ENCODE measurements at regions of chr12 and their contacts with region 1.

Region 1: GRCh38 chr12:117139025-117139717 is 40.0 kb upstream of the TESC start:
- DNase-seq: no peak
- ATAC-seq: no peak
- H3K4me3 ChIP-seq: no peak overlapping the region
- H3K4me3 Mint-ChIP-seq: no peak overlapping the region
- H3K27ac ChIP-seq: no peak overlapping the region
- H3K27ac Mint-ChIP-seq: no peak overlapping the region
- H3K4me1 ChIP-seq: peaks cover 7% of the 10 kb centered on the region
- H3K4me1 Mint-ChIP-seq: peaks cover 2% of the 10 kb centered on the region
- H3K27me3 ChIP-seq: no peaks in the 10 kb centered on the region
- H3K27me3 Mint-ChIP-seq: no peaks in the 10 kb centered on the region
- CTCF ChIP-seq: no peak

Region 2: DNA sequence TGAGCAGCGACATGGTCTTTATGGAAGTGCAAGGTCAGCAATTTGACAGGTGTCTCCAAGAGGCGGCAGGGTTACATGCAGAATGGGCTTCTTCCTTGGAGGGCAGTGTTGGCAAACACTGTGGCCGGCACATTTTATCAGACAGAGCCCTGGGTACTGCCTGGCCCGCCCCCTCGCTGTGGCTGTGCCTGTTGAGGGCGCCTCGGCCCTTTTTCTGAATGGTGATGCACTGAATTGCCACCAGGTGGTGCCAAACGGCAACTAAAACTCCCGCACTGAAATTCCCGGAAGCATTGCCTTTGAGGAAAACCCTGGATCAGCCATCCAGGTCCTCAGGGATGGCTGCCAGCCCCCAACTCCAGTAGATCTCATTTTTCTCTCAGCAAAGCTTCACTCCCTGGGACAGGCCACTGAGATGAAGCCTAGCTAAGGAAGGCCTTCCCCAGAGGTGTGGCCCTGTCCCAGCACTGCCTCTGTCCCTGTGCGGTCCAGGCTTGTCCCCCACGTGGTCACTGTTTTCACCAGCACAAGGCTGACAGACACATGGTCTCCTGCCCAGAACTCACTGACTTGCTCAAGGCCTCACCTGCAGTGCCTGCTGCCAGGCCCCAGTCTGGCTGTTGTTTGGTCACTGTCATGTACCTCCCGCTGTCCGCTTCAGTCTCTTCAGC is 113.6 kb before region 1 on chr12:
- CTCF ChIA-PET with region 1: interaction called, 3 read pairs
- POLR2A ChIA-PET with region 1: no interaction called
- intact Hi-C with region 1: loop called in 1 of 2 experiments (anchors 5 kb)
- DNase-seq: peak in 8 of 9 experiments; percentile 16 to 67 (median 48)
- ATAC-seq: peak; percentile 70
- H3K4me3 ChIP-seq: no peak overlapping the region
- H3K4me3 Mint-ChIP-seq: no peak overlapping the region
- H3K27ac ChIP-seq: no peak overlapping the region
- H3K27ac Mint-ChIP-seq: no peak overlapping the region
- H3K4me1 ChIP-seq: no peaks in the 10 kb centered on the region
- H3K4me1 Mint-ChIP-seq: no peaks in the 10 kb centered on the region
- H3K27me3 ChIP-seq: no peaks in the 10 kb centered on the region
- H3K27me3 Mint-ChIP-seq: no peaks in the 10 kb centered on the region
- CTCF ChIP-seq: peak; percentile 93

Region 3: GRCh38 chr12:117190210-117190781 is 51.1 kb after region 1 on chr12 and contains the start of gene FBXO21:
- CTCF ChIA-PET with region 1: no interaction called
- POLR2A ChIA-PET with region 1: no interaction called
- intact Hi-C with region 1: no loop called
- DNase-seq: peak; percentile 90 to 98 (median 93)
- ATAC-seq: peak; percentile 96
- H3K4me3 ChIP-seq: peak within 1 kb of the TSS; percentile 49 to 87
- H3K4me3 Mint-ChIP-seq: peak within 1 kb of the TSS; percentile 93
- H3K27ac ChIP-seq: peak within 1 kb of the TSS; percentile 69 to 83
- H3K27ac Mint-ChIP-seq: peak within 1 kb of the TSS; percentile 92
- H3K4me1 ChIP-seq: peaks cover 22% of the 10 kb centered on the region
- H3K4me1 Mint-ChIP-seq: peaks cover 31% of the 10 kb centered on the region
- H3K27me3 ChIP-seq: no peaks in the 10 kb centered on the region
- H3K27me3 Mint-ChIP-seq: no peaks in the 10 kb centered on the region
- CTCF ChIP-seq: no peak
- total RNA-seq, gene FBXO21: 77.7 to 87.7 TPM

Region 4: DNA sequence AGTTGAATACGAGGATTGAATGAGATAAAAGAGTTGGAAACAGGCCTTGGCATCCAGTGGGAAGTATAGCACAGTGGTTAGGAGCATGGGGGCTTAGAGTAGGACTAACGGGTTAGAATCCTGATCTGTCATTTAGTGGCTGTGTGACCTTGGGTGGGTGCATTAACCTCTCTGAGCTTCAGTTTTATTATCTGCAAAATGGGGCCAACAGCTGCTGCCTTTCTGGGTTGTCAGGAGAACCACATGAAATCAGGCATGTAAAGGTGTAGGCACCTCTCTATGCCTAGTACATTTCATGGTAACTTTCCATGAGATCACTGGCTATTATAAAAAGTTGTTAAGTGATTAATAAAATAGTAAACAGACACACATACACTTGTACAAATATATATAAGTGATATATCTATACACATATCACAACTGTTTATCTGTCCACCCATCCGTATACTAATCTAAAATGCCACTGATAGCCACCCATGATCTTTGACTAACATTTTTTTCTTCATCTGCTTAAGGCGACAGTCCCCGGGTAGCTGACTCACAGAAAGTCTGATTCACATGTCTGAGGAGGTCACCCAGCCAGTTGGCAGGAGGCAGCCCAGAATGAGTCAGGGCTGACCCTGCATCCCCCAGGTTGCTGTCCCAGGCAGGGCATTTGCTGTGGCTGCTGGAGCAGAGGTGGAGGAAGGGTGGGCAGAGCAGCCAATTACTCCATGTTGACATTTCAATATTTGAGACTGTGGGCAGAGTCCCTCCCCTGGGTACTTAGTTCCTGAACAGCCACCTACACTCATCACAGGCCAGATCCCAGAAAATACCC is 347.9 kb after region 1 on chr12:
- CTCF ChIA-PET with region 1: no interaction called
- POLR2A ChIA-PET with region 1: no interaction called
- intact Hi-C with region 1: no loop called
- DNase-seq: no peak
- ATAC-seq: no peak
- H3K4me3 ChIP-seq: no peak overlapping the region
- H3K4me3 Mint-ChIP-seq: no peak overlapping the region
- H3K27ac ChIP-seq: no peak overlapping the region
- H3K27ac Mint-ChIP-seq: no peak overlapping the region
- H3K4me1 ChIP-seq: no peaks in the 10 kb centered on the region
- H3K4me1 Mint-ChIP-seq: no peaks in the 10 kb centered on the region
- H3K27me3 ChIP-seq: no peaks in the 10 kb centered on the region
- H3K27me3 Mint-ChIP-seq: no peaks in the 10 kb centered on the region
- CTCF ChIP-seq: no peak

Measured in CD8-positive, alpha-beta T cell (primary cell).